ENCODE measurements at regions of chr10 and their contacts with region 1.

Region 1: GRCh38 chr10:87685832-87686574 is 26.3 kb downstream of the PAPSS2 start:
- DNase-seq: no peak
- H3K4me3 ChIP-seq: no peak overlapping the region
- H3K27me3 ChIP-seq: no peaks in the 10 kb centered on the region
- CTCF ChIP-seq: no peak

Region 2: GRCh38 chr10:87670586-87670985 is 15.4 kb before region 1 on chr10:
- CTCF ChIA-PET with region 1: no interaction called
- POLR2A ChIA-PET with region 1: interaction called, 17 read pairs
- DNase-seq: no peak
- H3K4me3 ChIP-seq: no peak overlapping the region
- H3K27me3 ChIP-seq: no peaks in the 10 kb centered on the region
- CTCF ChIP-seq: no peak

Region 3: GRCh38 chr10:87715552-87716347 is 29.7 kb after region 1 on chr10:
- CTCF ChIA-PET with region 1: no interaction called
- POLR2A ChIA-PET with region 1: no interaction called
- DNase-seq: no peak
- H3K4me3 ChIP-seq: no peak overlapping the region
- H3K27me3 ChIP-seq: no peaks in the 10 kb centered on the region
- CTCF ChIP-seq: no peak

Measured in BJ (cell line).